ENCODE measurements at regions of chr11 and their contacts with region 1.

Region 1: GRCh38 chr11:3699411-3699810 is 28.2 kb upstream of the CHRNA10 start:
- DNase-seq: no peak
- H3K4me3 ChIP-seq: no peak overlapping the region
- H3K27ac ChIP-seq: no peak overlapping the region
- H3K4me1 ChIP-seq: no peaks in the 10 kb centered on the region
- H3K27me3 ChIP-seq: no peaks in the 10 kb centered on the region
- CTCF ChIP-seq: no peak
- POLR2A ChIP-seq: no peak

Region 2: GRCh38 chr11:3764266-3764665 is 64.9 kb after region 1 on chr11:
- CTCF ChIA-PET with region 1: no interaction called
- POLR2A ChIA-PET with region 1: no interaction called
- dilution Hi-C with region 1: no loop called
- intact Hi-C with region 1: loop called (anchors 5 kb)
- DNase-seq: no peak
- H3K4me3 ChIP-seq: no peak overlapping the region
- H3K27ac ChIP-seq: no peak overlapping the region
- H3K4me1 ChIP-seq: no peaks in the 10 kb centered on the region
- H3K27me3 ChIP-seq: no peaks in the 10 kb centered on the region
- CTCF ChIP-seq: no peak
- POLR2A ChIP-seq: no peak

Measured in endothelial cell of umbilical vein (primary cell).